ENCODE measurements at regions of chr7 and their contacts with region 1.

Region 1: GRCh38 chr7:33895025-33895804 is 10.1 kb upstream of the BMPER start:
- DNase-seq: peak; percentile 69 to 71
- ATAC-seq: peak; percentile 90 to 100 (median 91)
- H3K4me3 ChIP-seq: no peak overlapping the region
- H3K4me3 Mint-ChIP-seq: peak overlapping the region; percentile 83
- H3K27ac ChIP-seq: no peak overlapping the region
- H3K27ac Mint-ChIP-seq: no peak overlapping the region
- H3K4me1 ChIP-seq: peaks cover 5% of the 10 kb centered on the region
- H3K4me1 Mint-ChIP-seq: peaks cover 12 to 13% of the 10 kb centered on the region in 2 donors
- H3K27me3 ChIP-seq: peaks cover 3% of the 10 kb centered on the region
- H3K27me3 Mint-ChIP-seq: peaks cover 19 to 44% of the 10 kb centered on the region in 2 donors
- CTCF ChIP-seq: peak; percentile 79

Region 2: DNA sequence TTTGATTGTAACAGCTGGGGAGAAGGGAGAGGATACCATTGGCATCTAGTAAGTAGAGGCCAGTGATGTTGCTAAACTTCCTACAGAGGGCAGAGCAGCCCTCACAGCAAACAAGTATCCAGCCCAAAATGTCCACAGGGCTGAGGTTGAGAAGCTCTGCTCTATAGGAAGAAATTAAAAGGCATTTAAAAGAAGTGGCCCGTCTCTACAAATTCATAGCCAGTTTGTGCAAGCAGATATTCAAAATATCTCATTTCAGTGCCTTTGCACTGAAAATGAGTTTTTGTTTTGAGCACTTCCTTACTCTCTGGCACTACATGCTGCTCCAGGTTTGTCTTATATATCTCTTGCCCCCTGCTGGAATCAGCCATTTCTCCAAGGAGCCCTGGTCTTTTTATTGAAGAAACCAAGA is 435.9 kb before region 1 on chr7:
- intact Hi-C with region 1: loop called (anchors 1 kb)
- DNase-seq: peak in 1 of 2 donors; percentile 9
- ATAC-seq: peak; percentile 68 to 94 (median 71)
- H3K4me3 ChIP-seq: no peak overlapping the region
- H3K4me3 Mint-ChIP-seq: no peak overlapping the region
- H3K27ac ChIP-seq: no peak overlapping the region
- H3K27ac Mint-ChIP-seq: peak overlapping the region in 1 of 2 donors; percentile 25
- H3K4me1 ChIP-seq: no peaks in the 10 kb centered on the region
- H3K4me1 Mint-ChIP-seq: peaks cover 7% of the 10 kb centered on the region in 2 donors
- H3K27me3 ChIP-seq: no peaks in the 10 kb centered on the region
- H3K27me3 Mint-ChIP-seq: no peaks in the 10 kb centered on the region
- CTCF ChIP-seq: peak; percentile 29

Region 3: GRCh38 chr7:33764752-33765451 is 130.3 kb before region 1 on chr7:
- intact Hi-C with region 1: loop called (anchors 10 kb)
- DNase-seq: no peak
- ATAC-seq: no peak
- H3K4me3 ChIP-seq: no peak overlapping the region
- H3K4me3 Mint-ChIP-seq: no peak overlapping the region
- H3K27ac ChIP-seq: no peak overlapping the region
- H3K27ac Mint-ChIP-seq: no peak overlapping the region
- H3K4me1 ChIP-seq: no peaks in the 10 kb centered on the region
- H3K4me1 Mint-ChIP-seq: peaks cover under 1 to 1% of the 10 kb centered on the region in 2 donors
- H3K27me3 ChIP-seq: no peaks in the 10 kb centered on the region
- H3K27me3 Mint-ChIP-seq: no peaks in the 10 kb centered on the region
- CTCF ChIP-seq: no peak

Measured in natural killer cell (primary cell).